Naive thymus-derived CD4-positive, alpha-beta T cell (primary cell): ENCODE measurements at regions of chr22 and their contacts with region 1.

Region 1: GRCh38 chr22:26428515-26429457 is at the start of gene ASPHD2:
- DNase-seq: peak; percentile 72 to 87 (median 83)
- ATAC-seq: peak; percentile 92
- H3K4me3 ChIP-seq: peak within 1 kb of the TSS; percentile 93
- H3K4me3 Mint-ChIP-seq: peak within 1 kb of the TSS; percentile 91 to 99 (median 99)
- H3K27ac ChIP-seq: peak within 1 kb of the TSS; percentile 88
- H3K27ac Mint-ChIP-seq: peak within 1 kb of the TSS; percentile 94 to 99 (median 98)
- H3K4me1 ChIP-seq: peaks cover 8 to 17% of the 10 kb centered on the region in 2 donors
- H3K4me1 Mint-ChIP-seq: peaks cover 14 to 55% (median 33%) of the 10 kb centered on the region in 7 donors
- H3K27me3 ChIP-seq: no peaks in the 10 kb centered on the region
- H3K27me3 Mint-ChIP-seq: peaks cover 0 to 22% (median 5%) of the 10 kb centered on the region in 5 donors
- total RNA-seq, gene ASPHD2: 1.8 to 18.1 (median 2.7) TPM

Region 2: DNA sequence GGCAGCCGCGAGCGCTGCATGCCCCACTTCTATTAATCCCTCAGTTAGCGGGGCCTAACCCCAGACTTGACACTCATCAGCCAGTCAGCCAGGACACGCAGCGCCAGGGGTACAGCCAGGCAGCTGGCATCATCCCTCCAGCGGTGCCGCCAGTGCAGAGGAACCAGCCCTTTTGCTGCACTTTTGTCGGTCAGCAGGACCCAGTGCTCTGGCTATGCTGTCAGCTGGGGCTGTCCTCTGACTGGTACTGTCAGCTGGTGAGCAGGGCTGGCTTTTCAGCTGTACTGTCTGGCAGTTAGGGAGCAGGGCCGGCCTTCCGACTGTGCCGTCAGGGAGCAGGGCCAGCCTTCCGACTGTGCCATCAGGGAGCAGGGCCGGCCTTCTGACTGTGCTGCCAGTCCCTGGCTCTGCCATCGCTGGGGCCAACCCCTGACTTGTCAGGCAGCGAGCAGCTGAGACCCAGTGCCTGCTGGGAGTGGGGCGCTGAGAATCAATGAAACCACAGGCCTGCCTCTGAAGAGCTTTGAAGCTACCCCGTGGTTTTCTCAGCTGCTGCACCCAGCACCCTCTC is 1360.8 kb before region 1 on chr22:
- CTCF ChIA-PET with region 1: no interaction called
- POLR2A ChIA-PET with region 1: no interaction called
- intact Hi-C with region 1: loop called in 1 of 2 experiments (anchors 10 kb)
- DNase-seq: peak; percentile 56 to 95 (median 92)
- ATAC-seq: peak; percentile 94
- H3K4me3 ChIP-seq: peak overlapping the region; percentile 43
- H3K4me3 Mint-ChIP-seq: peak overlapping the region; percentile 81 to 94 (median 87)
- H3K27ac ChIP-seq: peak overlapping the region; percentile 76
- H3K27ac Mint-ChIP-seq: peak overlapping the region; percentile 86 to 99 (median 98)
- H3K4me1 ChIP-seq: peaks cover 63 to 67% of the 10 kb centered on the region in 2 donors
- H3K4me1 Mint-ChIP-seq: peaks cover 51 to 96% (median 89%) of the 10 kb centered on the region in 7 donors
- H3K27me3 ChIP-seq: no peaks in the 10 kb centered on the region
- H3K27me3 Mint-ChIP-seq: no peaks in the 10 kb centered on the region

Region 3: DNA sequence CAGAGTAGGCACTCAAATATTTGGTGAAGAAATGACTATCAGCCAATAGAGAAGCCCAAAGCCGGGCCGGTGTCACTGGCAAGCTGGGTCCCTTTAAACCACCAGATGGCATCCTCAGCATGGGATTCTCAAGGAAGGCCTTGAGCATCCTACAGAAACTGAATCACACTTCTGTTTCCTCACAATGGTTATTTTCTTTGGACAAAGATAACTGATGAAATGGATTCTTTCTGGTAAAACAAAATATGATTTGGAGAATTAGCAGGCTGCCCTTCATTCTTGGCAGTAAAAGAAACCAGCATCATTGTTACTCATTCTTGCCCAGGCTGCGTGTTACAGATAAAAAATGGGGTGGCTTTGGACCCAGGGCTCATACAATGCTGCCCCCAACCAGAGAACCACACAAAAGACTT is 30.0 kb before region 1 on chr22:
- CTCF ChIA-PET with region 1: interaction called, 3 read pairs
- POLR2A ChIA-PET with region 1: no interaction called
- intact Hi-C with region 1: loop called in 1 of 2 experiments (anchors 1 kb)
- DNase-seq: peak; percentile 11 to 61 (median 42)
- ATAC-seq: peak; percentile 83
- H3K4me3 ChIP-seq: no peak overlapping the region
- H3K4me3 Mint-ChIP-seq: no peak overlapping the region
- H3K27ac ChIP-seq: no peak overlapping the region
- H3K27ac Mint-ChIP-seq: no peak overlapping the region
- H3K4me1 ChIP-seq: no peaks in the 10 kb centered on the region
- H3K4me1 Mint-ChIP-seq: peaks cover 0 to 4% (median 0%) of the 10 kb centered on the region in 7 donors
- H3K27me3 ChIP-seq: no peaks in the 10 kb centered on the region
- H3K27me3 Mint-ChIP-seq: peaks cover 2 to 13% (median 4%) of the 10 kb centered on the region in 5 donors

Region 4: DNA sequence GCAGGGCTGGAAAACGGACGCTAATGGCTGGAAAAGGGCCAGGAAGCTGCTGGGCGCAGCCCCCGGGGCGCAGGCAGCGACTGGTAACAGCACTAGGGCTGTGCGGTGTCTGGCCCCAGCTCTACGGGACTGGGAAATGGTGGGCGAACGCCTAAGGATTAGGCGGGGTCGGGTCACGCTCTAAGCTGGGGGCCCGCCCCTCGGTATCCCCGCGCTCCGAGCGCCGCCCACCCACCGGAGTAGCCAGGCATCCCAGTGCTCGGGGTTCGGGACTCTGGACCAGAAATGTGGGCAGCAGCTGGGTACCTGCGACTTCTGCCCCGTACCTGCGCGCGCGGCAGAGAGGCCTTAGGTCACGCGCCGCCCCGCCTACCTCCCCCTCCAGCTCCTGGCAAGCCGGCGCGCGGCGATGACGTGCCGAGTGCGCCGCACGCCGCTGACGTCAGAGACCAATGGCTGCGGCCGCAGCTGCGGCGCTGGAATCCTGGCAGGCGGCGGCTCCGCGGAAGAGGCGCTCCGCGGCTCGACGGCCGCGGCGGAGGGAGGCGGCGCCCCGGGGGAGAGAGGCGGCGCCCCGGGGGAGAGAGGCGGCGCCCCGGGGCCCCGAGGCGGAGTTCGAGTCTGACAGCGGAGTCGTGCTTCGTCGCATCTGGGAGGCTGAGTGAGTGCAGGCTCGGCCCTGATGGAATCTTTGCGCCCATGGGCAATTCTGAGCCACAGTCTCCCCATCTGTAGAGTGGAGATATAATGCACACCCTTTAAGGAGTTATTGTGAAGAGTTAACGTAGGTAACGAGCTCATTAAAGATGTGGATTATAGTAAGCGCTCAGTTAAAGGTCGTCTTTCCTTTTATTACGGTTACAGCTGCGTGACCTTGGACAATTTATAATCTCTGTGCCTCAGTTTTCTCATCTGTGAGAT is 54.9 kb after region 1 on chr22 and contains the starts of genes HPS4 and SRRD:
- CTCF ChIA-PET with region 1: no interaction called
- POLR2A ChIA-PET with region 1: interaction called, 39 read pairs
- intact Hi-C with region 1: loop called (anchors 1 kb)
- DNase-seq: peak; percentile 90 to 99 (median 94)
- ATAC-seq: peak; percentile 93
- H3K4me3 ChIP-seq: peak within 1 kb of the TSS; percentile 61
- H3K4me3 Mint-ChIP-seq: peak within 1 kb of the TSS; percentile 75 to 97 (median 93)
- H3K27ac ChIP-seq: peak within 1 kb of the TSS; percentile 95
- H3K27ac Mint-ChIP-seq: peak within 1 kb of the TSS; percentile 93 to 99 (median 98)
- H3K4me1 ChIP-seq: peaks cover 17 to 48% of the 10 kb centered on the region in 2 donors
- H3K4me1 Mint-ChIP-seq: peaks cover 47 to 77% (median 68%) of the 10 kb centered on the region in 7 donors
- H3K27me3 ChIP-seq: no peaks in the 10 kb centered on the region
- H3K27me3 Mint-ChIP-seq: no peaks in the 10 kb centered on the region
- total RNA-seq, gene HPS4: 45.5 to 64.3 (median 59.1) TPM
- total RNA-seq, gene SRRD: 18.9 to 22.8 (median 20.1) TPM

Region 5: DNA sequence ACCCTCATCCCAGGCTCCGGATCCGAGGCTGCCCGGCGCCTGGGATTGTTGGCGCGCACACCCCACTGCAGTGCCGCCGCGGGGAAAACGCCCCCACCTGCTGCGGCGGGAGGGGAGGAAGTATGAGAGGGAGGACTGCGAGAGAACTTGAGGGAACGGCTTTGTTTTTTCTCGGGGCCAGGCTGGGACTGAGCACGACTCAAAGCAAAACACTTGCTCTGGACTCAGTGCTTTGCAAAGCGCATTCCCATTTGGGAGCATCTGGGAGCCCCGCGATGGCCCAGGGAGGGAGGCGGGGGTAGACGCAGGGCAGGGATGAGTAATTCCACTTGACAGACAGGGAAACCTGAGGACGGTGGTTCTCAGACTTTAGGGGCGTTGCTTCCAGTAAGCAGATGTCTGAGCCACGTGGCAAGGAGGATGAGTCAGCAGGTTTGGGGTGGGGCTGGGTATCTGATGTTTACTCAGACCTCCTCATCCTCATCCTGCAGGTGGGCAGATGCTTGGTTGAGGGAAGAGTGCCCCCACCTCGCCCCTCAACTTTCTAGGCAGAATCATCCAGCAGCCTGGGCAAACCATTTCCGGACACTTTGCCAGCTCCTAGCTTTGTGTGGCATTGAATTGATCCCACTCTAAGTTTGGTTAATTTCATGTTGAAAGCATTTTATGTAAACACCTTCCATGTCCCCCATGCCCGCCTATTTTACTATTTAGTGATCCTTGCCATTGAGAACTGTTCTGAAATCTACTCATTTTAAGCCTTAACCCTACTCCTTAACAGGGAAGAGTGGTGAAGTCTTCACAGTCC is 230.1 kb after region 1 on chr22:
- CTCF ChIA-PET with region 1: no interaction called
- POLR2A ChIA-PET with region 1: no interaction called
- intact Hi-C with region 1: loop called in 1 of 2 experiments (anchors 5 kb)
- DNase-seq: peak in 6 of 9 donors; percentile 32 to 77 (median 40)
- ATAC-seq: peak; percentile 75
- H3K4me3 ChIP-seq: peak overlapping the region; percentile 87
- H3K4me3 Mint-ChIP-seq: peak overlapping the region; percentile 80 to 98 (median 88)
- H3K27ac ChIP-seq: no peak overlapping the region
- H3K27ac Mint-ChIP-seq: peak overlapping the region in 7 of 9 donors; percentile 47 to 91 (median 74)
- H3K4me1 ChIP-seq: peaks cover 15 to 20% of the 10 kb centered on the region in 2 donors
- H3K4me1 Mint-ChIP-seq: peaks cover 14 to 54% (median 21%) of the 10 kb centered on the region in 7 donors
- H3K27me3 ChIP-seq: no peaks in the 10 kb centered on the region
- H3K27me3 Mint-ChIP-seq: peaks cover 0 to 10% (median 0%) of the 10 kb centered on the region in 5 donors